ENCODE measurements at regions of chr3 and their contacts with region 1.

Region 1: GRCh38 chr3:9701006-9701405 is 2.6 kb upstream of the CPNE9 start:
- DNase-seq: no peak
- ATAC-seq: no peak
- H3K4me3 ChIP-seq: no peak overlapping the region
- H3K4me3 Mint-ChIP-seq: no peak overlapping the region
- H3K27ac ChIP-seq: no peak overlapping the region
- H3K27ac Mint-ChIP-seq: no peak overlapping the region
- H3K4me1 ChIP-seq: peaks cover 4 to 17% of the 10 kb centered on the region in 2 experiments
- H3K4me1 Mint-ChIP-seq: peaks cover 10 to 19% (median 13%) of the 10 kb centered on the region in 3 donors
- H3K27me3 ChIP-seq: peaks cover 2 to 33% of the 10 kb centered on the region in 2 experiments
- H3K27me3 Mint-ChIP-seq: peaks cover 10 to 22% of the 10 kb centered on the region in 2 donors

Region 2: DNA sequence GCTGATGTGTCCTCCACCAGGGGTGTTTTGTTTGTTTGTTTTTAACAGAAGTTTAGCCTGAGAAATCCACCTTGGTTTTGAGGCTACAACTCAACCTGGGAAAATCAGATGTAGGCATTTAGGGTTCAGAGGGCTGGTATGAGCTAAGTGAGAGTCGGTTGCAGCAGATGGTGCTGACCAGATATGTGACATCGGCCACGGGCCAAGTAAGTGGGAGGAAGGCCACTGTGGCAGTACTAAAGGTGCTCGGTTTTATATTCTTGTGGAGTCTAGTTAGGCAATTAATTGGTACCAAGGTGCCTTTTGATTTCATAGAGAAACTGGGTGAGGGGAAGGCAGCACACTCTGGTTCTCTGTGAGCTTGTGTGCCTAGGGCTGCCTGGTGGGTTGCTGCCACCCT is 41.2 kb before region 1 on chr3:
- CTCF ChIA-PET with region 1: no interaction called
- POLR2A ChIA-PET with region 1: interaction called in 1 of 2 experiments, 14 read pairs
- DNase-seq: no peak
- ATAC-seq: no peak
- H3K4me3 ChIP-seq: no peak overlapping the region
- H3K4me3 Mint-ChIP-seq: no peak overlapping the region
- H3K27ac ChIP-seq: no peak overlapping the region
- H3K27ac Mint-ChIP-seq: no peak overlapping the region
- H3K4me1 ChIP-seq: peaks cover 0 to 4% of the 10 kb centered on the region in 2 experiments
- H3K4me1 Mint-ChIP-seq: peaks cover 24 to 44% (median 33%) of the 10 kb centered on the region in 3 donors
- H3K27me3 ChIP-seq: no peaks in the 10 kb centered on the region
- H3K27me3 Mint-ChIP-seq: no peaks in the 10 kb centered on the region

Region 3: GRCh38 chr3:9736831-9737230 is 35.8 kb after region 1 on chr3:
- CTCF ChIA-PET with region 1: no interaction called
- POLR2A ChIA-PET with region 1: no interaction called
- DNase-seq: no peak
- ATAC-seq: no peak
- H3K4me3 ChIP-seq: no peak overlapping the region
- H3K4me3 Mint-ChIP-seq: no peak overlapping the region
- H3K27ac ChIP-seq: no peak overlapping the region
- H3K27ac Mint-ChIP-seq: peak overlapping the region in 1 of 2 donors; percentile 41
- H3K4me1 ChIP-seq: peaks cover 5 to 36% of the 10 kb centered on the region in 2 experiments
- H3K4me1 Mint-ChIP-seq: peaks cover 38 to 48% (median 46%) of the 10 kb centered on the region in 3 donors
- H3K27me3 ChIP-seq: no peaks in the 10 kb centered on the region
- H3K27me3 Mint-ChIP-seq: no peaks in the 10 kb centered on the region

Region 4: GRCh38 chr3:9826815-9827567 is 126.0 kb after region 1 on chr3:
- CTCF ChIA-PET with region 1: no interaction called
- POLR2A ChIA-PET with region 1: interaction called in 1 of 2 experiments, 10 read pairs
- DNase-seq: peak in 4 of 35 experiments; percentile 9 to 37 (median 10)
- ATAC-seq: peak in 3 of 4 experiments; percentile 48 to 56 (median 50)
- H3K4me3 ChIP-seq: no peak overlapping the region
- H3K4me3 Mint-ChIP-seq: no peak overlapping the region
- H3K27ac ChIP-seq: no peak overlapping the region
- H3K27ac Mint-ChIP-seq: no peak overlapping the region
- H3K4me1 ChIP-seq: no peaks in the 10 kb centered on the region
- H3K4me1 Mint-ChIP-seq: peaks cover 7 to 14% (median 9%) of the 10 kb centered on the region in 3 donors
- H3K27me3 ChIP-seq: no peaks in the 10 kb centered on the region
- H3K27me3 Mint-ChIP-seq: no peaks in the 10 kb centered on the region

Region 5: GRCh38 chr3:9878700-9879099 is 177.7 kb after region 1 on chr3:
- CTCF ChIA-PET with region 1: no interaction called
- POLR2A ChIA-PET with region 1: no interaction called
- DNase-seq: no peak
- ATAC-seq: no peak
- H3K4me3 ChIP-seq: no peak overlapping the region
- H3K4me3 Mint-ChIP-seq: no peak overlapping the region
- H3K27ac ChIP-seq: no peak overlapping the region
- H3K27ac Mint-ChIP-seq: no peak overlapping the region
- H3K4me1 ChIP-seq: no peaks in the 10 kb centered on the region
- H3K4me1 Mint-ChIP-seq: no peaks in the 10 kb centered on the region
- H3K27me3 ChIP-seq: peaks cover 0 to 12% of the 10 kb centered on the region in 2 experiments
- H3K27me3 Mint-ChIP-seq: no peaks in the 10 kb centered on the region